ENCODE measurements at regions of chr10 and their contacts with region 1.

Region 1: DNA sequence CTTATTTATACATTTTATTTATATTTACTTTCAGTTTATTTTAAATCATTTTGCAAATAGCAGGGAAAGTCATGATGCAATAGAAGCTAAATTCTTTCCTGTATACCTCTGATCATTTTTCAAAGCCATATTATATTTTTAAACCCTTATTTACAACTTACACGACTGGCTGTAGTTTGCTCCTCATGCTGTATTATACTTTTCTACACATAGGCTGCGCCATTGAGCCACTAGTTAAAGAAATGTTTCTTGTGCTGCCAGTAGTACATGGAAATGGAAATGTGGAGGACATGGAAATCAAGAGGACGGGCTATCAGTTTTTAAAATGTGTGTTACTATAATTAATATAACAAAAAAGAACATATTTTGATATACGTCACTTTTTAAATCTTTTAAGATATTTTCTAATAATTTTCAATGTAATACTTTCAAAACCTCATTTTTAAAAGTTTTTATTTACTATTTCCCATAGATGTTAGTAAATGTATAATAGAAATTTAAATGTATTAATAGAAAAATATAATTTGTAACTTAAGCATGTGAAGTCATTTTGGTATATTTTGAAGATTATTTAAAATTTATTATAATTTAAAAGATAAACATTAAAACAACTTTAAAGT is 118.5 kb downstream of the VTI1A start:
- DNase-seq: no peak
- H3K4me3 ChIP-seq: no peak overlapping the region
- H3K27ac ChIP-seq: no peak overlapping the region
- H3K4me1 ChIP-seq: no peaks in the 10 kb centered on the region
- H3K27me3 ChIP-seq: no peaks in the 10 kb centered on the region
- CTCF ChIP-seq: peak; percentile 24 to 73 (median 65)
- EP300 ChIP-seq: no peak
- POLR2A ChIP-seq: no peak

Region 2: GRCh38 chr10:113126229-113127201 is 561.0 kb after region 1 on chr10:
- intact Hi-C with region 1: loop called (anchors 5 kb)
- DNase-seq: peak; percentile 86
- H3K4me3 ChIP-seq: peak overlapping the region in 3 of 4 donors; percentile 33 to 44 (median 39)
- H3K27ac ChIP-seq: peak overlapping the region in 2 of 4 donors; percentile 11 to 29
- H3K4me1 ChIP-seq: peaks cover 0 to 23% (median 17%) of the 10 kb centered on the region in 4 donors
- H3K27me3 ChIP-seq: no peaks in the 10 kb centered on the region
- CTCF ChIP-seq: peak in 1 of 4 experiments; percentile 83
- EP300 ChIP-seq: no peak
- POLR2A ChIP-seq: no peak

Region 3: DNA sequence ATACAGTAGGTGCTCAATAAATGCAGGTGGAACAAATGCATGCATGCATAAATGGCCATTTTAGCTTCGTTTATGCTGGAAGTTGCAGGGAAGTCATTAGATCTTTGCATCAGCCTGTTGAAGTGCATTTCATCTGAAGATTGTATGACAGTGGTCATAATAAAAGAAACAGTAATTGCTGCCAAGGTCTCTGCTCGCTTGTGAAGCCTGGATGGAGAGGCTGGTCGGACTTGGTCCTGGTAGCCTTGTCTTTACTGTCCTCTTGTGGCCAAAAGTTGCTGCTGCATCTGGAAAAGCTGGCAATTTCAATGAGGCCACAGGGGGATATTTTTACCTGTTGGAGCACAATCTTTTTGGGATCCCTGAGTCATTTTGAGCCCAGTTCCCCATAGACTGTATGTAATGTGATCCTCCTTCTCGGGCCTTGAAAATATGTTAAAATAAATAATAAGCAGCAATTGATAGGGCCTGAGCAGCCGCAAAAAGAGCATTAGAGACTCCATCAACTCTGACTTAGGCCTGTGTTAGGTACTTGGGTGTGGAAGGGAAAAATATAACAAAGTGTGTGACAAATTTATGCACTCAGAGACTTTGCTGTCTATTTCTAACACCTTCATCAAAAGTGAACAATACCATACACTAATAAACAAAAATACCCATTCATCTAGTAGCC is 955.7 kb after region 1 on chr10:
- intact Hi-C with region 1: loop called (anchors 5 kb)
- DNase-seq: peak; percentile 90
- H3K4me3 ChIP-seq: no peak overlapping the region
- H3K27ac ChIP-seq: peak overlapping the region in 2 of 4 donors; percentile 16 to 27
- H3K4me1 ChIP-seq: peaks cover 0 to 12% (median 8%) of the 10 kb centered on the region in 4 donors
- H3K27me3 ChIP-seq: no peaks in the 10 kb centered on the region
- CTCF ChIP-seq: peak; percentile 95 to 99 (median 96)
- EP300 ChIP-seq: no peak
- POLR2A ChIP-seq: no peak

Region 4: GRCh38 chr10:113563306-113564088 is 998.0 kb after region 1 on chr10:
- intact Hi-C with region 1: loop called (anchors 5 kb)
- DNase-seq: peak; percentile 84
- H3K4me3 ChIP-seq: peak overlapping the region; percentile 16 to 46 (median 37)
- H3K27ac ChIP-seq: peak overlapping the region in 1 of 4 donors; percentile 16
- H3K4me1 ChIP-seq: peaks cover 0 to 13% (median 3%) of the 10 kb centered on the region in 4 donors
- H3K27me3 ChIP-seq: no peaks in the 10 kb centered on the region
- CTCF ChIP-seq: peak; percentile 83 to 100 (median 92)
- EP300 ChIP-seq: no peak
- POLR2A ChIP-seq: no peak